A673 (cell line): ENCODE measurements at regions of chr6 and their contacts with region 1.

Region 1: GRCh38 chr6:73817253-73817652 is 121.2 kb downstream of the CD109 start:
- DNase-seq: no peak
- H3K4me3 ChIP-seq: no peak overlapping the region
- H3K27ac ChIP-seq: no peak overlapping the region
- H3K4me1 ChIP-seq: no peaks in the 10 kb centered on the region
- H3K27me3 ChIP-seq: no peaks in the 10 kb centered on the region
- CTCF ChIP-seq: no peak

Region 2: DNA sequence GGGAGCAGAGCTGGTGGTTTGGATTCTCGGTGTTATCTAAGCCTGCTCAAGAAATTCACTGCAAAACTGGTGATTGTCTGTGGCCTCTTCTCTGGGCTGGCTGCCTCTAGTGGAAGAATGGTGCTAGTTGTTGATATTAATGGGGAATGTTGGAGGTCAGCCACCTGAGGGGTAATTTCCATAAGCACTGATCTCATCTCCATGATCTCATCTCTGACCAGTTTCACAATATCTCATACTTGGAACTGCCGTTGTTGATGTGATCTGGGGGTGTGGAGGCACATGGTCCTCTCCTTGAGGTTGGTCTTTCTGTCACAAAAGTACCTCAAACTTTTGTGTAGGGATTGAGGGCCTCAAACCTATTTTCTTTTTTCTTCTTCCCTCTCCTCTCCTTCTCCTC is 18.7 kb before region 1 on chr6:
- CTCF ChIA-PET with region 1: interaction called, 10 read pairs
- POLR2A ChIA-PET with region 1: no interaction called
- intact Hi-C with region 1: no loop called
- DNase-seq: peak; percentile 50
- H3K4me3 ChIP-seq: no peak overlapping the region
- H3K27ac ChIP-seq: no peak overlapping the region
- H3K4me1 ChIP-seq: peaks cover 7% of the 10 kb centered on the region
- H3K27me3 ChIP-seq: no peaks in the 10 kb centered on the region
- CTCF ChIP-seq: peak; percentile 31; the same call in 1 of the 2 replicates